Thyroid gland (tissue), 4 donors: ENCODE measurements at regions of chr1 and their contacts with region 1.

Region 1: DNA sequence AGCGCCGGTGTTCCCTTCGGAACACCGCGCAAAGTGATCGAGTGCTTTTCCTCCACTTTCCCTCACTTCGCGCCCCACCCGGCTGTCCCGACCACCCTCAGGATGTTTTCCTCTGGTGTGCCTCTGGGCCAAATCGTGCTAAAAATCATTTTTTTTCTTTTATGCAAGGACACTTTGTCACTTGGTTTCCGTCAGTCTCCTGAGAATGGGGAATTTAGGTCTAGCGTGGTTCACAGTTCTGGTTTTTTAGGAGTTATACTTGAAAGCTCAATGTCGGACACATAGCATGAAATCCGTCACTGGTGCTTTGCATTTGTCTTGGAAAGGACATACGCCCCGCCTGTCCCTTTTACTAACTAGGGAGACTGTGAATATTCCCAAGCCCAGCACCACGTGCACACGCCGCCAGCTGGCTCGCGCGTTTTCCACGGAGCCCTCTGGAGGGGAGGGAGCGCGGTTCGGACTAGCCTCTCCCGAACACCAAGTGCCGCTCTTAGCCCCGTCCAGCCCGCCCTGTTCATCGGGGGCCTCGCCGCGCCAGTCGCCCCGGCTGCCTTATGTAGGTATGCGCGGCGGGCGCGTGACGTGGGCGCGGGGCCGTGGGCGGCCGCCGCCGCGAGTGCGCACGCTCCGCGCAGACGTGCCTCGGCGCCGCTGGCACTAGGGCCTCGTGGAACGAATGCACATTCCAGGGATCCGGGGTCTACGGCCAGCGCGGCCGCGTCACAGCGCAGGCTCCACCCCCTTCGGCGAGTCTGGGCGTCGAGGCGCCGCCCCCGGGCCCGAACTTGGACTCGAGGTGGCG is 572 bp upstream of the IRF2BP2 start:
- DNase-seq: peak; percentile 96 to 97
- H3K4me3 ChIP-seq: peak overlapping the region; percentile 5 to 54 (median 45)
- H3K27ac ChIP-seq: peak overlapping the region; percentile 99 to 100 (median 100)
- H3K4me1 ChIP-seq: peaks cover 33 to 37% of the 10 kb centered on the region in 2 donors
- H3K27me3 ChIP-seq: no peaks in the 10 kb centered on the region
- CTCF ChIP-seq: peak in 3 of 6 experiments; percentile 3 to 31 (median 15)
- POLR2A ChIP-seq: peak; percentile 98 to 99

Region 2: GRCh38 chr1:234535763-234536515 is 74.6 kb before region 1 on chr1:
- intact Hi-C with region 1: loop called (anchors 5 kb)
- DNase-seq: peak; percentile 77 to 87
- H3K4me3 ChIP-seq: no peak overlapping the region
- H3K27ac ChIP-seq: peak overlapping the region; percentile 98 to 99 (median 99)
- H3K4me1 ChIP-seq: peaks cover 85 to 96% of the 10 kb centered on the region in 2 donors
- H3K27me3 ChIP-seq: no peaks in the 10 kb centered on the region
- CTCF ChIP-seq: no peak
- POLR2A ChIP-seq: no peak

Region 3: DNA sequence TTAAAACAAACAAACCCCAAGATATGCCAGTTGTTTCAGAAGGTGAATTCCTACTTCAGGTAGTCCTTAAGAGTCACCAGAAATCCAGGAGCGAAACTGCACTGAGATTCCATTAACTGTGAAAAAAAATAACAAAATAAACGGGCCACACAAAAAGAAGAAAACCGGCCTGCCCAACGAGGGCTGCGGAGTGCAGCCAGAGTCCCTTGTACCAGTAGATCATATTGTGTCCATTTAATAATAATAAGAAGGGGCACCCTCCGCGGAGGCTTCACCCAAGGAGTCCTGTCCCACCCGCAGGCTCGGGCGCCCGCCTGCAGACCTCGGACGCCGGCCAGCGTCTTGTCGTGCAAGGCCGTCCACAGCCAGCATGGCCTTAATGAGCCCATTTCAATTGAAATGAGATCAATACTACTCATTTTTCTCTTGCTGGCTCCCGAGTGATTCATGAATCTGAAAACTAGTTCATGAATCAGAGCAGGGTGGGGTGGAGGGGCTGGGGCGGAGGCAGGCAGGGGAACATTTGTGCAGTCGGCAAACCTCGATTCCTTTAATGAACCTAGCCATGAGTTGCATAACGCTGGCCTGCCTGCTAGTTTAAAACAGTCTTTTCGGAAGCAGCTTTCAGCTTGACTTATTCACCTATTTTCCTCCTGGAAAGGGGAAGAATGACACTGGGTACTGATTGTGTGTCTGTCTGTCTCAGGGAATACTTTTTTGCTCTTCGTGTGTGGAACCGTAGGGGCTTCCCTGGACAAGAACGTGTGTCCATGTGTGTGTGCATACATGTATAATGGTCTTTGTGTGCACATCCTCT is 112.6 kb after region 1 on chr1:
- intact Hi-C with region 1: loop called (anchors 5 kb)
- DNase-seq: peak; percentile 61 to 63
- H3K4me3 ChIP-seq: no peak overlapping the region
- H3K27ac ChIP-seq: peak overlapping the region; percentile 97 to 100 (median 99)
- H3K4me1 ChIP-seq: peaks cover 87 to 96% of the 10 kb centered on the region in 2 donors
- H3K27me3 ChIP-seq: no peaks in the 10 kb centered on the region
- CTCF ChIP-seq: no peak
- POLR2A ChIP-seq: no peak

Region 4: GRCh38 chr1:234925440-234926263 is 315.1 kb after region 1 on chr1:
- intact Hi-C with region 1: loop called (anchors 5 kb)
- DNase-seq: peak; percentile 58
- H3K4me3 ChIP-seq: no peak overlapping the region
- H3K27ac ChIP-seq: peak overlapping the region; percentile 77 to 87 (median 82)
- H3K4me1 ChIP-seq: peaks cover 47 to 52% of the 10 kb centered on the region in 2 donors
- H3K27me3 ChIP-seq: no peaks in the 10 kb centered on the region
- CTCF ChIP-seq: no peak
- POLR2A ChIP-seq: peak in 1 of 2 donors; percentile 44

Region 5: GRCh38 chr1:234980645-234981396 is 370.3 kb after region 1 on chr1:
- intact Hi-C with region 1: loop called (anchors 10 kb)
- DNase-seq: peak; percentile 56 to 59
- H3K4me3 ChIP-seq: no peak overlapping the region
- H3K27ac ChIP-seq: peak overlapping the region; percentile 75 to 90 (median 87)
- H3K4me1 ChIP-seq: peaks cover 35 to 78% of the 10 kb centered on the region in 2 donors
- H3K27me3 ChIP-seq: no peaks in the 10 kb centered on the region
- CTCF ChIP-seq: no peak
- POLR2A ChIP-seq: no peak

Region 6: GRCh38 chr1:235075188-235075926 is 464.8 kb after region 1 on chr1:
- intact Hi-C with region 1: loop called (anchors 5 kb)
- DNase-seq: peak; percentile 77 to 81
- H3K4me3 ChIP-seq: no peak overlapping the region
- H3K27ac ChIP-seq: peak overlapping the region; percentile 90 to 99 (median 96)
- H3K4me1 ChIP-seq: peaks cover 50 to 85% of the 10 kb centered on the region in 2 donors
- H3K27me3 ChIP-seq: no peaks in the 10 kb centered on the region
- CTCF ChIP-seq: no peak
- POLR2A ChIP-seq: peak in 1 of 2 donors; percentile 44